ENCODE measurements at regions of chr22 and their contacts with region 1.

Region 1: DNA sequence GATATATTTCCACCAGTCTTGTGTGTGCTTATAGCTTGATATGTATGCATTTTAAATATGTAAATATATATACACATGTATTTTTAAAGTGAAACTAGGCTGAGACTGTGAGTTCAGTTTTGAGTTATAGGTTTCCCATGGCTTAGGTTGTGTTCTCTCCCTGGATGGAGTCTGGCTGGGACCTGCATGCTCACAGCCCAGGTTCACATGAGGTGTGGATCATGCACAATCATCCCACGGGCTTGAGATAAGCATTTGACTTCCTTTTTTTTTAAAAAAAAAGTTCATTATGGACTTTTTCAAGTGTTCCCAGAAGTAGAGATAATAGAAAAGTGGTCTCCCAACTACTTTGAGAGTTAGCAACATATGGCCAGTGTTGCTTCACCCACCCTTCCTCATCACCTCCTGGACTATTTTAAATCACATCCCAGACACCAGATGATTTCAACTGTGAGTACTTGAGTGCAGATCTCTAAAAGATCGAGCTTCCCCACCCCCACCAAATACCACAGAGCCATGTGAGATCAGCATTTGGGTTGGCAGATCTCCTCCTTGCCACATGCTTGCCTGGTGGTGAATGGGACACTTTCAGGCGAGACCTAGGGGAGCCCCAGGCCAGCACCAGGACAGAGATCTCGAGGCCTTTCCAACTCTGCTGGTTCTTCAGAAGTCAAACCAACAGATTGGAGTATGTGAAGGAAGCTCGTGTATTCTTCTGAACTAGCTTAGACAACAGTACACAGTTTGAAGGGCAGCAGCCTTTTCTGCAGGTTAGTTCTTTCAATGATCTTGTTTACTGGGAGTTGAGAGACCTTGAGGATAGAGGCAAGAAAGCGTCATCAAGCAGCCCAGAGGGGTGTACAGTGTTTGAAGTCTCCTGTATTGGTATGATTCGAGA is 15.9 kb downstream of the MED15 start:
- DNase-seq: no peak
- H3K4me3 ChIP-seq: no peak overlapping the region
- H3K27ac ChIP-seq: peak overlapping the region; percentile 77
- H3K4me1 ChIP-seq: peaks cover 58% of the 10 kb centered on the region
- H3K27me3 ChIP-seq: no peaks in the 10 kb centered on the region
- CTCF ChIP-seq: no peak

Region 2: GRCh38 chr22:20562461-20563247 is 39.3 kb after region 1 on chr22:
- CTCF ChIA-PET with region 1: no interaction called
- POLR2A ChIA-PET with region 1: no interaction called
- intact Hi-C with region 1: loop called (anchors 5 kb)
- DNase-seq: no peak
- H3K4me3 ChIP-seq: no peak overlapping the region
- H3K27ac ChIP-seq: no peak overlapping the region
- H3K4me1 ChIP-seq: peaks cover 7% of the 10 kb centered on the region
- H3K27me3 ChIP-seq: no peaks in the 10 kb centered on the region
- CTCF ChIP-seq: no peak

Measured in A673 (cell line).